Activated CD4-positive, alpha-beta memory T cell treated with anti-CD3 and anti-CD28 coated beads, Interleukin-2, amount 10 ng/mL, durations not matched to agents 7 days and 5 days (primary cell): ENCODE measurements at regions of chr2 and their contacts with region 1.

Region 1: GRCh38 chr2:65064728-65065552 is 8.7 kb downstream of the CEP68 start:
- DNase-seq: peak; percentile 62
- H3K4me3 Mint-ChIP-seq: no peak overlapping the region
- H3K27ac Mint-ChIP-seq: peak overlapping the region; percentile 76
- H3K4me1 Mint-ChIP-seq: peaks cover 35% of the 10 kb centered on the region
- H3K27me3 Mint-ChIP-seq: no peaks in the 10 kb centered on the region

Region 2: GRCh38 chr2:64873472-64873924 is 191.4 kb before region 1 on chr2:
- CTCF ChIA-PET with region 1: no interaction called
- POLR2A ChIA-PET with region 1: no interaction called
- DNase-seq: peak; percentile 80
- H3K4me3 Mint-ChIP-seq: no peak overlapping the region
- H3K27ac Mint-ChIP-seq: no peak overlapping the region
- H3K4me1 Mint-ChIP-seq: peaks cover 7% of the 10 kb centered on the region
- H3K27me3 Mint-ChIP-seq: peaks cover 13% of the 10 kb centered on the region

Region 3: GRCh38 chr2:65024149-65024829 is 40.7 kb before region 1 on chr2:
- CTCF ChIA-PET with region 1: no interaction called
- POLR2A ChIA-PET with region 1: no interaction called
- DNase-seq: no peak
- H3K4me3 Mint-ChIP-seq: no peak overlapping the region
- H3K27ac Mint-ChIP-seq: no peak overlapping the region
- H3K4me1 Mint-ChIP-seq: no peaks in the 10 kb centered on the region
- H3K27me3 Mint-ChIP-seq: no peaks in the 10 kb centered on the region

Region 4: GRCh38 chr2:65075605-65076344 is 10.8 kb after region 1 on chr2:
- CTCF ChIA-PET with region 1: interaction called, 18 read pairs
- POLR2A ChIA-PET with region 1: interaction called, 6 read pairs
- DNase-seq: no peak
- H3K4me3 Mint-ChIP-seq: no peak overlapping the region
- H3K27ac Mint-ChIP-seq: no peak overlapping the region
- H3K4me1 Mint-ChIP-seq: peaks cover 7% of the 10 kb centered on the region
- H3K27me3 Mint-ChIP-seq: no peaks in the 10 kb centered on the region

Region 5: DNA sequence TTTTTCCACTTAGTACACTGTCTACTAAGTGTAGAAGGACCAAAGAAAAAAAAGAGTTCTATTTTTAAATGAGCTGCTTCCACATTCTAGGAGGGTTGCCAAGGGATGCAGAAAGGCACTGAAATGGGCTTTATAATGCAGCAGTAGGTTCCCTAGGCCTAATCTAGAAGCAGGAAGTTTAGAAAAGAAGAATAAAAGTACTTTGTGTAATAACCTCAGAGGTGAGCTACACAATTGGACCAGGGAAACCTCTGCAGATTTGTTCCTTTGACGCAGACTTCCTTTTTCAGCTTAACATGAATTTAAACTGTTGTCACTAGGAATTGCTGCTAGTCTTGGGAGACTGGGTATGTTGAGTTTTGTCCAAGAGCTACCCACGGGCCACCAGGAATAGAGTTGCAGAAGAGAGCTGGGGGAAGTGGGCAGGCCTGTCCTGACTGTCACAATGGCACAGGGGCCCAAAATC is 99.5 kb after region 1 on chr2:
- CTCF ChIA-PET with region 1: interaction called, 82 read pairs
- POLR2A ChIA-PET with region 1: interaction called, 7 read pairs
- DNase-seq: no peak
- H3K4me3 Mint-ChIP-seq: no peak overlapping the region
- H3K27ac Mint-ChIP-seq: no peak overlapping the region
- H3K4me1 Mint-ChIP-seq: peaks cover 22% of the 10 kb centered on the region
- H3K27me3 Mint-ChIP-seq: no peaks in the 10 kb centered on the region

Region 6: GRCh38 chr2:65186872-65187851 is 122.2 kb after region 1 on chr2:
- CTCF ChIA-PET with region 1: interaction called, 40 read pairs
- POLR2A ChIA-PET with region 1: interaction called, 4 read pairs
- DNase-seq: peak; percentile 70
- H3K4me3 Mint-ChIP-seq: no peak overlapping the region
- H3K27ac Mint-ChIP-seq: no peak overlapping the region
- H3K4me1 Mint-ChIP-seq: peaks cover 9% of the 10 kb centered on the region
- H3K27me3 Mint-ChIP-seq: peaks cover 18% of the 10 kb centered on the region

Region 7: GRCh38 chr2:65227425-65228262 is 162.7 kb after region 1 on chr2 and contains the start of gene ACTR2:
- CTCF ChIA-PET with region 1: interaction called, 10 read pairs
- POLR2A ChIA-PET with region 1: interaction called, 12 read pairs
- DNase-seq: peak; percentile 96
- H3K4me3 Mint-ChIP-seq: peak within 1 kb of the TSS; percentile 96
- H3K27ac Mint-ChIP-seq: peak within 1 kb of the TSS; percentile 99
- H3K4me1 Mint-ChIP-seq: peaks cover 46% of the 10 kb centered on the region
- H3K27me3 Mint-ChIP-seq: no peaks in the 10 kb centered on the region
- total RNA-seq, gene ACTR2: 514 to 517 TPM